ENCODE measurements at regions of chr7 and their contacts with region 1.

Region 1: GRCh38 chr7:100563809-100564400 is 9.8 kb downstream of the SAP25 start:
- DNase-seq: peak; percentile 87 to 94 (median 90)
- ATAC-seq: peak; percentile 82
- H3K4me3 ChIP-seq: no peak overlapping the region
- H3K27ac ChIP-seq: no peak overlapping the region
- H3K4me1 ChIP-seq: peaks cover 5 to 38% of the 10 kb centered on the region in 2 experiments; a peak in 4 of 5 replicates
- H3K27me3 ChIP-seq: no peaks in the 10 kb centered on the region
- CTCF ChIP-seq: peak; percentile 92 to 99 (median 96)
- EP300 ChIP-seq: no peak
- POLR2A ChIP-seq: no peak
- RAD21 ChIP-seq: peak; percentile 74 to 92

Region 2: DNA sequence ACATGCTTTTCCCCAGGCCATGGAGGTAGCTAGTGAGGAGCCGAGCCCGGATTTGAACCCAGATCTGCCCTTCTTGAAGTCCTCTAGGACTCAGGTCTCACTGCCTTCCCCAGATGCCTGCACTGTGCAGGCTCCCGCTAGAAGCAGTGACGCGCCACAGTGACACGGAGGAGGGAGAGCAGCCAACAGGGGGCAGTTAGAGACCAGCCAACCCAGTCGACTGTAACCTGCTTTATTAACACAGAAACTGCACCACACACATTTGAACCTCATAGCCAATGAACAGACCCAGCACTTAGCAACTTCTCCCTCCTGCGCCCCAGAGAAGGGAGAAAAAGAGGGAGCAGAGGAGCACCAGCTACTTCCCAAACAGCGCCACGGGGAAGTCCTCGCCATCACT is 163.2 kb before region 1 on chr7:
- CTCF ChIA-PET with region 1: interaction called, 9 read pairs
- POLR2A ChIA-PET with region 1: no interaction called
- in situ Hi-C with region 1: no loop called
- intact Hi-C with region 1: loop called (anchors 2 kb)
- DNase-seq: peak; percentile 61 to 85 (median 74)
- ATAC-seq: peak; percentile 99
- H3K4me3 ChIP-seq: no peak overlapping the region
- H3K27ac ChIP-seq: no peak overlapping the region
- H3K4me1 ChIP-seq: peaks cover 0 to 14% of the 10 kb centered on the region in 2 experiments; a peak in 2 of 5 replicates
- H3K27me3 ChIP-seq: peaks cover 2 to 9% of the 10 kb centered on the region in 2 experiments; a peak in 4 of 5 replicates
- CTCF ChIP-seq: peak; percentile 95 to 97 (median 97)
- EP300 ChIP-seq: no peak
- POLR2A ChIP-seq: no peak
- RAD21 ChIP-seq: peak; percentile 66 to 92

Region 3: GRCh38 chr7:100469227-100470044 is 94.5 kb before region 1 on chr7:
- CTCF ChIA-PET with region 1: interaction called, 26 read pairs
- POLR2A ChIA-PET with region 1: interaction called, 5 read pairs
- in situ Hi-C with region 1: loop called (anchors 25 kb)
- intact Hi-C with region 1: loop called (anchors 1 kb)
- DNase-seq: peak; percentile 88 to 92 (median 90)
- ATAC-seq: peak; percentile 87
- H3K4me3 ChIP-seq: no peak overlapping the region
- H3K27ac ChIP-seq: no peak overlapping the region
- H3K4me1 ChIP-seq: peaks cover 17 to 52% of the 10 kb centered on the region in 2 experiments
- H3K27me3 ChIP-seq: no peaks in the 10 kb centered on the region
- CTCF ChIP-seq: peak; percentile 95 to 98 (median 98)
- EP300 ChIP-seq: no peak
- POLR2A ChIP-seq: 0 out of 2 replicates have a peak, but pooled peaks have one; percentile 18
- RAD21 ChIP-seq: peak; percentile 92 to 94

Region 4: GRCh38 chr7:100483101-100483721 is 80.7 kb before region 1 on chr7:
- CTCF ChIA-PET with region 1: interaction called, 30 read pairs
- POLR2A ChIA-PET with region 1: interaction called, 5 read pairs
- in situ Hi-C with region 1: no loop called
- intact Hi-C with region 1: loop called (anchors 1 kb)
- DNase-seq: peak; percentile 85 to 93 (median 88)
- ATAC-seq: peak; percentile 76
- H3K4me3 ChIP-seq: peak overlapping the region; percentile 64
- H3K27ac ChIP-seq: peak overlapping the region; percentile 27; the same call in 1 of the 3 replicates
- H3K4me1 ChIP-seq: peaks cover 8 to 70% of the 10 kb centered on the region in 2 experiments; a peak in 4 of 5 replicates
- H3K27me3 ChIP-seq: no peaks in the 10 kb centered on the region
- CTCF ChIP-seq: peak; percentile 88 to 99 (median 98)
- EP300 ChIP-seq: no peak; the same call in 1 of the 2 replicates
- POLR2A ChIP-seq: no peak
- RAD21 ChIP-seq: peak; percentile 93 to 94

Region 5: GRCh38 chr7:100547872-100548271 is 16.0 kb before region 1 on chr7:
- CTCF ChIA-PET with region 1: no interaction called
- POLR2A ChIA-PET with region 1: interaction called, 11 read pairs
- in situ Hi-C with region 1: no loop called
- intact Hi-C with region 1: no loop called
- DNase-seq: peak; percentile 55 to 84 (median 68)
- ATAC-seq: peak; percentile 77
- H3K4me3 ChIP-seq: no peak overlapping the region
- H3K27ac ChIP-seq: peak overlapping the region; percentile 78
- H3K4me1 ChIP-seq: peaks cover 24 to 51% of the 10 kb centered on the region in 2 experiments
- H3K27me3 ChIP-seq: no peaks in the 10 kb centered on the region
- CTCF ChIP-seq: 0 out of 6 replicates have a peak, but pooled peaks of 1 of the 3 experiments have one; percentile 20
- EP300 ChIP-seq: 0 out of 2 replicates have a peak, but pooled peaks have one; percentile 22
- POLR2A ChIP-seq: no peak
- RAD21 ChIP-seq: 0 out of 4 replicates have a peak, but pooled peaks of 1 of the 2 experiments have one; percentile 8

Region 6: GRCh38 chr7:100726996-100727761 is 163.3 kb after region 1 on chr7:
- CTCF ChIA-PET with region 1: interaction called, 9 read pairs
- POLR2A ChIA-PET with region 1: no interaction called
- in situ Hi-C with region 1: no loop called
- intact Hi-C with region 1: loop called (anchors 2 kb)
- DNase-seq: no peak
- ATAC-seq: no peak
- H3K4me3 ChIP-seq: no peak overlapping the region
- H3K27ac ChIP-seq: no peak overlapping the region
- H3K4me1 ChIP-seq: peaks cover 0 to 13% of the 10 kb centered on the region in 2 experiments; a peak in 3 of 5 replicates
- H3K27me3 ChIP-seq: peaks cover 6 to 21% of the 10 kb centered on the region in 2 experiments; a peak in 3 of 5 replicates
- CTCF ChIP-seq: no peak
- EP300 ChIP-seq: no peak
- POLR2A ChIP-seq: no peak
- RAD21 ChIP-seq: no peak